ENCODE measurements at regions of chr3 and their contacts with region 1.

Region 1: GRCh38 chr3:153762411-153763235 is 358.6 kb upstream of the ARHGEF26 start:
- DNase-seq: peak; percentile 81
- H3K4me3 ChIP-seq: peak overlapping the region; percentile 75
- H3K27ac ChIP-seq: peak overlapping the region; percentile 94
- H3K4me1 ChIP-seq: peaks cover 58% of the 10 kb centered on the region
- CTCF ChIP-seq: no peak

Region 2: DNA sequence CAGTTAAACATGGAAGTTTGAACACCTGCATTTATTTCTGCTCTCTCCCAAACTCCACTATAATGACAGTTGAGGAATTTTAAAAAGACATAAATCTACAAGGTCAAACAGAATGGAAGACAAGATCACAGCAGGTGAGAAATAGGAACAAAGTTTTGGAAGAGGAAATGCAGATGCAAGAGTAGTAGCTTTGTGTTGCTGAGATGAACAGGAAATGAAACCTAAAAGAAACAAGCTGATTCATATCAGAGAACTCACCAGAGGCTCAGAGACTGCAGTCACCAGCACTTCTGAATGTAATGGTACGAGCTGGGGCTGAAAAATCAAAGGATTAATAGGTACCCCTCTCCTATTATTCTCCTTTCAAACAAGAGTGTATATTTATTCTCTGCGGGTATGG is 140.7 kb before region 1 on chr3:
- CTCF ChIA-PET with region 1: no interaction called
- POLR2A ChIA-PET with region 1: interaction called, 10 read pairs
- intact Hi-C with region 1: loop called (anchors 2 kb)
- DNase-seq: peak; percentile 78
- H3K4me3 ChIP-seq: peak overlapping the region; percentile 54
- H3K27ac ChIP-seq: peak overlapping the region; percentile 88
- H3K4me1 ChIP-seq: peaks cover 71% of the 10 kb centered on the region
- CTCF ChIP-seq: no peak

Region 3: GRCh38 chr3:153628591-153628990 is 134.0 kb before region 1 on chr3:
- CTCF ChIA-PET with region 1: no interaction called
- POLR2A ChIA-PET with region 1: interaction called, 10 read pairs
- intact Hi-C with region 1: loop called (anchors 2 kb)
- DNase-seq: peak; percentile 51
- H3K4me3 ChIP-seq: peak overlapping the region; percentile 60
- H3K27ac ChIP-seq: peak overlapping the region; percentile 85
- H3K4me1 ChIP-seq: peaks cover 98% of the 10 kb centered on the region
- CTCF ChIP-seq: no peak

Region 4: GRCh38 chr3:153679714-153680113 is 82.9 kb before region 1 on chr3:
- CTCF ChIA-PET with region 1: no interaction called
- POLR2A ChIA-PET with region 1: interaction called, 5 read pairs
- intact Hi-C with region 1: loop called (anchors 5 kb)
- DNase-seq: peak; percentile 85
- H3K4me3 ChIP-seq: peak overlapping the region; percentile 51
- H3K27ac ChIP-seq: peak overlapping the region; percentile 71
- H3K4me1 ChIP-seq: peaks cover 28% of the 10 kb centered on the region
- CTCF ChIP-seq: no peak

Region 5: GRCh38 chr3:153693207-153693606 is 69.4 kb before region 1 on chr3:
- CTCF ChIA-PET with region 1: no interaction called
- POLR2A ChIA-PET with region 1: no interaction called
- intact Hi-C with region 1: no loop called
- DNase-seq: no peak
- H3K4me3 ChIP-seq: no peak overlapping the region
- H3K27ac ChIP-seq: no peak overlapping the region
- H3K4me1 ChIP-seq: no peaks in the 10 kb centered on the region
- CTCF ChIP-seq: no peak

Region 6: GRCh38 chr3:153744889-153745288 is 17.7 kb before region 1 on chr3:
- CTCF ChIA-PET with region 1: interaction called, 3 read pairs
- POLR2A ChIA-PET with region 1: interaction called, 69 read pairs
- intact Hi-C with region 1: loop called (anchors 2 kb)
- DNase-seq: no peak
- H3K4me3 ChIP-seq: peak overlapping the region; percentile 62
- H3K27ac ChIP-seq: peak overlapping the region; percentile 78
- H3K4me1 ChIP-seq: peaks cover 75% of the 10 kb centered on the region
- CTCF ChIP-seq: no peak

Region 7: DNA sequence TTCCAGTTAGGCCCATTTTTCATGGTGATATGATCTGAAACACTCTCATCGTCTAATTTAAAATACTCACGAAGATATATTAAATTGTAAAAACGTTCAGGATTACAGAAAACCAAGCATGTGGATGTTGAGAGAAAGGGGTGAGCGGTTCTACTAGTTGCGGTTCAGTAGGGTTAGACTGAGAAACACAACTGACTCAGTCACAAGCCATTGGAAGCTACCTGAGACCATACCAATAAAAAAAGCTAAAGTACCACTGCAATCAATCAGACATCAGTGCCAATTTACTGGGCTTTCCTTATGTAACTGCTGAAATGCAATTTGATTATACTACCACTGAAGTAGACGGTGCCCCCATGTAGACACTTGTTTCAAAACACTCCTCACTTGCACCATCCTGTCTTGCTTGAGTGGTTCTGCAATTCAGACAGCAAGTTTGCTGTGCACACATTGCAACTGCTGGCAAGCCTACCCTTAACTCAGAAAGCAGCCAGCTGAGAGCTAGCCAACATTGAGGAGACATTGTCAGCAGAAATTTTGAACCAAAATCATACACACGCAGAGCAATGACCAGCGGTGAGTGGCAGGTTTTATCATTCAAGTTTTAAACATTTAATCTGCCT is 10.1 kb before region 1 on chr3:
- CTCF ChIA-PET with region 1: interaction called, 14 read pairs
- POLR2A ChIA-PET with region 1: interaction called, 69 read pairs
- intact Hi-C with region 1: loop called (anchors 1 kb)
- DNase-seq: peak; percentile 85
- H3K4me3 ChIP-seq: peak overlapping the region; percentile 54
- H3K27ac ChIP-seq: peak overlapping the region; percentile 83
- H3K4me1 ChIP-seq: peaks cover 75% of the 10 kb centered on the region
- CTCF ChIP-seq: no peak

Region 8: DNA sequence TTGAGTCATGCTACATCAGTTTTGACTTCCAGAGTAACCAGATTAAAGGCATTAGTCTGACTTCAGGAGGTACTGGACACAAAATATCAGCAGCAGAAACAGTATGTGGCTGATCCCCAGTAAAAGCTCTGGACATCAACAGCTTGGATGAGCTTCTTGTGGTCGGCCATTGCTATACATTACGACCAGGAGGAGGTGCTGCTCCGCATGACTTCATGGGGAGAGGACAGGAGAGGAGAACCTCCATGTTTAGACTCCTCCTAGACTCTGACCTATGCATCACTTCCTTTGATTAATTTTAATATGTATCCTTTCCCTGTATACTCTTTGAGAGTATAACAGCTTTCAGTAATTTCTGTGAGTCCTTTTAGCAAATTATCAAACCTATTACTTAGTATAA is 72.9 kb after region 1 on chr3:
- CTCF ChIA-PET with region 1: no interaction called
- POLR2A ChIA-PET with region 1: no interaction called
- intact Hi-C with region 1: no loop called
- DNase-seq: no peak
- H3K4me3 ChIP-seq: no peak overlapping the region
- H3K27ac ChIP-seq: no peak overlapping the region
- H3K4me1 ChIP-seq: no peaks in the 10 kb centered on the region
- CTCF ChIP-seq: peak; percentile 44

Region 9: GRCh38 chr3:155110976-155111901 is 1348.6 kb after region 1 on chr3:
- CTCF ChIA-PET with region 1: no interaction called
- POLR2A ChIA-PET with region 1: no interaction called
- intact Hi-C with region 1: loop called (anchors 5 kb)
- DNase-seq: peak; percentile 88
- H3K4me3 ChIP-seq: peak overlapping the region; percentile 63
- H3K27ac ChIP-seq: peak overlapping the region; percentile 98
- H3K4me1 ChIP-seq: peaks cover 96% of the 10 kb centered on the region
- CTCF ChIP-seq: no peak

Measured in OCI-LY7 (cell line).